ENCODE measurements at regions of chr6 and their contacts with region 1.

Region 1: GRCh38 chr6:113858480-113859348 is 1.6 kb downstream of the MARCKS start:
- DNase-seq: peak; percentile 93
- H3K4me3 ChIP-seq: peak overlapping the region; percentile 84
- H3K27ac ChIP-seq: peak overlapping the region; percentile 99
- H3K4me1 ChIP-seq: no peaks in the 10 kb centered on the region
- H3K27me3 ChIP-seq: no peaks in the 10 kb centered on the region
- CTCF ChIP-seq: peak; percentile 96

Region 2: GRCh38 chr6:112773187-112773586 is 1085.5 kb before region 1 on chr6:
- intact Hi-C with region 1: no loop called
- DNase-seq: no peak
- H3K4me3 ChIP-seq: no peak overlapping the region
- H3K27ac ChIP-seq: no peak overlapping the region
- H3K4me1 ChIP-seq: no peaks in the 10 kb centered on the region
- H3K27me3 ChIP-seq: no peaks in the 10 kb centered on the region
- CTCF ChIP-seq: no peak

Region 3: GRCh38 chr6:113719056-113719455 is 139.7 kb before region 1 on chr6:
- intact Hi-C with region 1: loop called (anchors 10 kb)
- DNase-seq: peak; percentile 66
- H3K4me3 ChIP-seq: no peak overlapping the region
- H3K27ac ChIP-seq: peak overlapping the region; percentile 47
- H3K4me1 ChIP-seq: no peaks in the 10 kb centered on the region
- H3K27me3 ChIP-seq: no peaks in the 10 kb centered on the region
- CTCF ChIP-seq: no peak

Measured in colonic mucosa (tissue), 4 donors.